Sigmoid colon (tissue), 7 donors: ENCODE measurements at regions of chr1 and their contacts with region 1.

Region 1: GRCh38 chr1:33080885-33081553 is at the start of gene AZIN2:
- DNase-seq: peak; percentile 98
- H3K4me3 ChIP-seq: peak within 1 kb of the TSS; percentile 49 to 77 (median 64)
- H3K27ac ChIP-seq: peak within 1 kb of the TSS; percentile 16 to 70 (median 32)
- H3K4me1 ChIP-seq: peaks cover 0 to 21% (median 18%) of the 10 kb centered on the region in 4 donors
- H3K27me3 ChIP-seq: no peaks in the 10 kb centered on the region
- CTCF ChIP-seq: no peak
- EP300 ChIP-seq: no peak
- POLR2A ChIP-seq: peak; percentile 26 to 39
- total RNA-seq, gene AZIN2: 1.1 to 2.5 (median 1.5) TPM

Region 2: DNA sequence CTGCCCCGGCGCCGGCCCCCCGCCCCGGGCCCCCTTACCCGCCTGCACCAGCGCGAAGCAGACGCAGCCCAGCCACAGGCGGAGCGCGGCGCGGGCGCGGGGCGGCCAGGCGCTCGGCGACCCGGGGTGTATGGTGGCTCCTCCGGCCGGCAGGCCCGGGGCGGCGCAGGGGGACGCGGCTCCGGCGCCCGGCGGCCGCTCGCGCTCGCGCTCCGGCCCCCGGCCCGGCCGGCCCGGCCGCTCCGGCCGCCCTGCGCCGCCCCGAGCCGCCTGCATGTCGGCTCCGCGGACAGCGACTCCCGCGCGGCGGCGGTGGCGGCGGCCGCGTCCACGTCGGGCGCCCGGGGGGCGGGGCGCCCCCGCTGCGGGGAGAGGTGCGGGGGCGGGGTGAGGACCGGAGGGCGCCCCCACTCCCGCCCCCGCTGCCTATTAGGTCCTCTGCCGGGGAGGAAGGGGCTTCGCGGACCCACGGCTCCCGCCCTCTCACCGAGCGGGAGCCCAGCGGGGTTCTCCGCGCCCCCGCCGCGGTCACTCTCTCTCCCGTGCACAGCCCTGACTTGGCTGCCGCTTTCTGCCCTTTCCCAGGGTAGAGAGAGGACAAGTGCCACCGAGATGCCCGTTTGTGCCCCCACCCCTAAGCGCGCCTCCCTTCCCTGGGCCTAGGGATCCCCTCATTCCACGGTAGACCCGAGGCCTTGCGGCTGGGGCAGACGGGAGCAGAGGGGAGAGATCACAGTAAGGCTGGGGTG is 210.2 kb before region 1 on chr1 and contains the start of gene FNDC5:
- intact Hi-C with region 1: loop called (anchors 5 kb)
- DNase-seq: no peak
- H3K4me3 ChIP-seq: peak within 1 kb of the TSS; percentile 28 to 56 (median 48)
- H3K27ac ChIP-seq: peak within 1 kb of the TSS in 3 of 4 donors; percentile 1 to 48 (median 28)
- H3K4me1 ChIP-seq: peaks cover 0 to 28% (median 14%) of the 10 kb centered on the region in 4 donors
- H3K27me3 ChIP-seq: peaks cover 0 to 4% (median 0%) of the 10 kb centered on the region in 3 donors
- CTCF ChIP-seq: no peak
- EP300 ChIP-seq: no peak
- POLR2A ChIP-seq: no peak
- total RNA-seq, gene FNDC5: 0.41 to 10.2 (median 1.6) TPM

Region 3: DNA sequence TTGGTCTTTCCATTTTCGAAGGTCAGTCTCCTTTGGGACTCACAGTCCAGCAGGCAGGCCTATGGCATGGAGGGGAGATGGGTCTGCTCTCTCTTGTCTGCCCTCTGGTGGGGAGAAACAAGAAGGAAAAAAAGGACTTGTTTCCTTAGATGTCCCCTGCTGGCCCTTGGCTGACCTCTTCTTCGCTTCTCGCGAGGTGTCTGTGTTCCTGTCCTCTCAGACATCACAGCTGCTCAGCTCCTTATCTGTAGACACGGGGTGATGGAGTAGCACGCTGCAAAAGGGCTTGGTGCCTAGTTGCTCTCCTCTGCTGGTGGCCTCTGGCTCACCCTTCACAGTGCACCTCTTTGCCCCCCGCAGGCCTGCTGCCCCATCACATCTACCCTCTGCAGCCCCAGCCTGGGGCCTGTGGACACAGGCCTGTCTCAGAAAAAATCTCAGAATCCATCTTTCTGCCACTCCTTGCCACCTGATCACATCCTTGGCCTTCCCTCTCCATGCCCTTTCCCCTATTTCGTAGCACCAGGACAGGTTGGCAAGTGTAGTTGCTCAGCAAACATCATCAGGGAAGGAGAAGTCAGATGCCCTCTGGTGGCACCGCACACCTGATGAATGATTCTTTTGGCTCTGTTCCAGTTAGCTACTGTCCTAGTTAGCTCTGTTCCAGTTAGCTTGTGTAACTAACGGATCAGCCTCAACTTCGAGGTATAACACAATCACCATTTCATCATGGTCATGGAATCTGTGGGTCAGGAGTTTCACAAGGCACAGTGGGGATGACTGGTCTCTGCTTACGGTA is 25.6 kb before region 1 on chr1:
- intact Hi-C with region 1: loop called (anchors 2 kb)
- DNase-seq: peak; percentile 91
- H3K4me3 ChIP-seq: no peak overlapping the region
- H3K27ac ChIP-seq: peak overlapping the region; percentile 39 to 61 (median 50)
- H3K4me1 ChIP-seq: peaks cover 0 to 16% (median 14%) of the 10 kb centered on the region in 4 donors
- H3K27me3 ChIP-seq: no peaks in the 10 kb centered on the region
- CTCF ChIP-seq: peak; percentile 52 to 86 (median 67)
- EP300 ChIP-seq: no peak
- POLR2A ChIP-seq: no peak